HEK293T (cell line): ENCODE measurements at regions of chr6 and their contacts with region 1.

Region 1: DNA sequence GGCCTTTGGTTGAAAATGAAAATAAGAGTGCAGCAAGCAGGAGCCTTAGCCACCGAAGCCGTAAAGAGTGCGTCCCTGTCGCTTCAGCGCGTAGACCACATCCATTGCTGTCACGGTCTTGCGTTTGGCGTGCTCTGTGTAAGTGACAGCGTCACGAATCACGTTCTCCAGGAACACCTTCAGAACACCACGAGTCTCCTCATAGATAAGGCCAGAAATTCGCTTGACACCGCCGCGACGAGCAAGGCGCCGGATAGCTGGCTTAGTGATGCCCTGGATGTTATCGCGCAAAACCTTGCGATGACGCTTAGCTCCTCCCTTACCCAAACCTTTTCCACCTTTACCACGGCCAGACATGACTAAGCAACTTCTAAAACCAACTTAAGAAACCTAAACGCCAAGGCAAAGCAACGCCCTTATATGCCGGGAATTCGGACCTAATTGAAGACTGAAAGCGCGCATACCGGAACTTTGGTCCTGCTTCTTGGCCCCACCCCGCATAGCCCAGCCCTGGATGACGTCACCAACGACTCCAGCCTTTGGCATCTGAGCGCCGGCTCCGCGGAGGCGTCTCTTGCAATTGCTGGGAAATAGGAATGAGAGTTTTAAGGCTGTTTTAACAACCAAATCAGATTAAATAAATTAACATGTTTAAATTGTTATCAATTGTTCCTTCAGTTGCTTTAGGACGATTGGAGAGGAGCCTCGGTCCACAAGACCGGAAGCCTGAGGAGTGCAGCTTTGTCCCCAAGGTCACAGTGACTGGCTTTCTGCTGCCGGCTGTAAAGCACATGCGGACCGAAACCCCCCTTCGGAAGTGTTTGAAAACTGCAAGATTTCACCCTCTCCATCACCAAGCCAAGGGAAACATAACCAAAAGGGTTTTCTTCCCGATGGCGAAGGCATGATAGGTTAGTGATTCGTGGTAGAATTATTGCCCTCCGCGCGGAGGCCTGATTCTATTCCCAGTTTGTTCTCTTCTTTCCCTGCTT is 79.6 kb upstream of the BTN3A2 start:
- DNase-seq: peak; percentile 83

Region 2: GRCh38 chr6:26180346-26180745 is 105.1 kb before region 1 on chr6:
- CTCF ChIA-PET with region 1: no interaction called
- POLR2A ChIA-PET with region 1: no interaction called
- DNase-seq: no peak

Region 3: GRCh38 chr6:26204332-26205165 is 80.9 kb before region 1 on chr6:
- CTCF ChIA-PET with region 1: no interaction called
- POLR2A ChIA-PET with region 1: interaction called, 47 read pairs
- DNase-seq: peak; percentile 86

Region 4: DNA sequence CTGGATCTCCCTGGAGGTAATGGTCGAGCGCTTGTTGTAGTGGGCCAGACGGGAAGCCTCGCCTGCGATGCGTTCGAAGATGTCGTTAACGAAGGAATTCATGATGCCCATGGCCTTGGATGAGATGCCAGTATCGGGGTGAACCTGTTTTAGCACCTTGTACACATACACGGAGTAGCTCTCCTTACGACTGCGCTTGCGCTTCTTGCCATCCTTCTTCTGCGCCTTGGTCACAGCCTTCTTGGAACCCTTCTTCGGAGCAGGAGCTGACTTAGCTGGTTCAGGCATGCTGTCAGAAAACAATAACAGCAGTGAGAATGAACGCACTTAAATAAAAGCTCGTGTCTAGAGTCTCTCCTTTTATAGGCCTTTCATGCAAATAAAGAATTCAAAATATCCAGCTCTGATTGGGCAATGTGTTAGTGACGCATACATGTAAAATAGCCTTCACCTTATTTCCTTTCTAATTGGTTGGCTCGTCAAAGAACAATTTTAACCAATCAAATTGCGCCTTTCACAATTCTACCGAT is 69.0 kb before region 1 on chr6:
- CTCF ChIA-PET with region 1: no interaction called
- POLR2A ChIA-PET with region 1: interaction called, 15 read pairs
- DNase-seq: no peak

Region 5: DNA sequence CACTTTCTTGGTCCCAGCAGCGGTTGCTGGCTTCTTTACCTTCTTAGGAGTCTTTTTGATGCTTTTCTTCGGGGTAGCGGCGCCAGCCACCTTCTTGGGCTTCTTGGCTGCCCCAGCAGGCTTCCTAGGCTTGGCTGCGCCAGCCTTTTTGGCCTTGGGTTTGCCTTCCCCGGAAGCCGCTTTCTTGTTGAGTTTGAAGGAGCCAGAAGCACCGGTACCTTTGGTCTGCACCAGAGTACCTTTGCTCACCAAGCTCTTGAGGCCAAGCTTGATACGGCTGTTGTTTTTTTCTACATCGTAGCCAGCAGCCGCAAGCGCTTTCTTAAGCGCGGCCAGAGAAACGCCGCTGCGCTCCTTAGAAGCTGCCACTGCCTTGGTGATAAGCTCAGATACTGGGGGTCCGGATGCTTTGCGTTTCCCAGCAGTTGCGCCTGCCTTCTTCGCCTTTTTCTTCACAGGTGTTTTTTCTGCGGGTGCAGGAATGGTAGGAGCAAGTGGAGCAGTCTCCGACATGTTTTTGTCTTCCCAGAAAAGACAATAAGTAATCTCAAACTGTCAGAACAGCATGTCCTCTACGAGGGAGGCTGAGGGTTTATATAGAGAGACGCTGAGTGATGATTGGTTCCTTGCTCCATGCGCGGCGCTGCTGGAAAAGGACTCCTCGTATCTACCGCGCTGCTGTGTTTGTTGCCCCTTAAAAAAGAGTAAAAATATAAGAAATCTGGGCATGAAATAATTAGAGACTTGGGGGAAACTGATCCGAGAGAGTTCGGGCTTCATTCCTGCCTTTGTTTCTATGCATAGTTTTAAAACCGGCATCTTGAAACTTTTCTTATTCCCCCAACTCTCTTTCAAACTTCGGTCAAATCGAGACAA is 50.8 kb before region 1 on chr6:
- CTCF ChIA-PET with region 1: no interaction called
- POLR2A ChIA-PET with region 1: interaction called, 21 read pairs
- DNase-seq: peak; percentile 72

Region 6: GRCh38 chr6:26273673-26274588 is 11.5 kb before region 1 on chr6:
- CTCF ChIA-PET with region 1: no interaction called
- POLR2A ChIA-PET with region 1: interaction called, 15 read pairs
- DNase-seq: no peak

Region 7: DNA sequence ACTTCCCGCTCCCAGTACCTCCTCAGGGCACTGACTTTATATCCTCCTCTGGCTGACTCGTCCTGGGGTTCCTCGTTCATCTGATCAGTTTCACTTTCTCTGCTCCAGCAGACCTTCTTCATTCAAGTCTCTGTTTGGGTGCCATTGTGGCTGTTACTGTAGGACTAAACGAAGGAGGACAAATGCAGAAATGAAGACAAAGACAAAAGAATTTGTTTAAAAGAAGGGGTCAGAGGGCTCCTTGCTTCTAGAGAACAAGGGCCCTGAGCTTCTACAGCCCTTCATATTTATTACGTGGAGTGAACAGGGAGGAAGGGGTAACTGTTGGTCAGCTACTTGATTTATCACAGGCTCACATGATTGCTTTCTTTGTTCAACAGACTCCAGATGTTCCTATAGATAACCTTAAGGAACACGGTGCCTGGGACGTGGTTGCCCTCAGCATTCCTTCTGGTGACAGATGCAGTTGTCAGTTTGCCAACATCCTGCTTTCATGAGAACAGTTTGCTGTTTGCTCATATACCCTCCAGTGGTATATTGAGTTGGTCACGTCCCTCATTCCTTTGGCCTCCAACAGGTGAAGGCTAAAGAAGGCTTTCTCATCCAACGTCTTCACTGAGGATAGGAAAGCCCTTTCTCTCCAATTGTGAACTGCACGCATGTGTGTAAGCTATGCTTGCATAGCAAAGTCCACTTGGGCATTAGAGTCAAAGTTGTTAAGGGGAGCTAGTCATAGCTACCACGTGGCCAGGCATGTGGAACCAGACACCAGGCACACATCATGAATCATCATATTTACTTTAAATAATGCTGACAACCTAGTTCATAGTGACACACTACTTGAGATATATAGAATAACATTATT is 10.5 kb after region 1 on chr6:
- CTCF ChIA-PET with region 1: interaction called, 3 read pairs
- POLR2A ChIA-PET with region 1: interaction called, 11 read pairs
- DNase-seq: no peak